CD14-positive monocyte (primary cell): ENCODE measurements at regions of chr2 and their contacts with region 1.

Region 1: GRCh38 chr2:45778720-45779171 is 127.3 kb downstream of the PRKCE start:
- DNase-seq: peak; percentile 70 to 78 (median 77)
- H3K4me3 ChIP-seq: peak overlapping the region in 1 of 3 experiments; percentile 50
- H3K4me3 Mint-ChIP-seq: peak overlapping the region; percentile 50 to 57
- H3K27ac ChIP-seq: no peak overlapping the region
- H3K27ac Mint-ChIP-seq: no peak overlapping the region
- H3K4me1 ChIP-seq: peaks cover 25 to 27% of the 10 kb centered on the region in 2 donors
- H3K4me1 Mint-ChIP-seq: peaks cover 50% of the 10 kb centered on the region
- H3K27me3 ChIP-seq: no peaks in the 10 kb centered on the region
- H3K27me3 Mint-ChIP-seq: peaks cover 0 to 1% (median 0%) of the 10 kb centered on the region in 3 donors
- CTCF ChIP-seq: peak; percentile 89

Region 2: DNA sequence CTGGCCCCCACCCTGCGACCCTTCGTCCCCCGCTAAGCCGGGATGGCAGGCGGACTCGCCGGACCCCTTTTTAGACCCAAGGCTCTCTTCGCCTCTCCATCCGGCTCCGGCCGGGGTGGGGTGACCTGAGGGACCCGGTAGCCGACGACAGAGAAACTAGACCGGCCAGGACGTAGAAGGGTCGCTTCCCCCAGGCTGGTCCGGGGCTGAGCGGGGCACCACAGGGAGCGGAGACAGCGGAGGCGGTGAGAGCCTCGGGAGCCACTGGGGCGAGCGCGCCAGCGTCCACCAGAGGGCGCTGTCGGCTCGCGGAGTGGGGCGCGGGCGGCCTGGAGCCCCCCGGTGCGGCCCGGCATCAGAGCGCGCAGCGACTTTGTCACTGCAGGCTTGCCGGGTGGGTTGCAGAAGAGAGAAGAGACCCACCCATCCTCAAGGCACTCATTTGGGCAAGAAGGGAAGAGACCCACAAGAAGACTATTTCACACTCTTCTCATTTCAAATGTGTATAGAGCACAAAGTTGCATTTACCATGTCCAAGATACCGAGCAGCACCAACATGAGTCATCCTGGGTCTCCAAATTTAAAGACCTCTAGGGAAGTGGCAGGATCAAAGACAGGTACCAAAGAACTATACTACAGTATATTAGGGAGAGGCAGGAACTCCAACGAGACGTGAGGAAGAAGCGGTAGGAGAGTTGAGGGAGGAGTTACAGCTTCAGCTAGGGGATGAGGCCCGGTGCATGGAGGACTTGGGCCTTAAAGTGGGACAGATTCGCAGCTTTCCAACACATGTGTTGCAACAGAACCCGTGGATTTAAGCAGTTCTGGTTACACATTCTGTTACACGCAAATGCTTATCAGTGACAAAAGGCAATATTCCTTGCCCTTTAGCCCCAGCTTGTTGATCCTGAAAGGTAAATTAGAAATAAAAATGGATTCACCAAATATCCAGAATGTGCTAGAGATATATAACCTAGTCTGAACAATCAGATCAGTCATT is 134.9 kb before region 1 on chr2:
- intact Hi-C with region 1: loop called (anchors 2 to 5 kb)
- DNase-seq: peak; percentile 64 to 72 (median 71)
- H3K4me3 ChIP-seq: peak overlapping the region; percentile 27 to 73 (median 40)
- H3K4me3 Mint-ChIP-seq: peak overlapping the region; percentile 79 to 86
- H3K27ac ChIP-seq: no peak overlapping the region
- H3K27ac Mint-ChIP-seq: peak overlapping the region in 3 of 7 donors; percentile 54 to 89 (median 56)
- H3K4me1 ChIP-seq: peaks cover 10 to 12% of the 10 kb centered on the region in 2 donors
- H3K4me1 Mint-ChIP-seq: peaks cover 16% of the 10 kb centered on the region
- H3K27me3 ChIP-seq: peaks cover 0 to 16% of the 10 kb centered on the region in 2 donors
- H3K27me3 Mint-ChIP-seq: peaks cover 18 to 27% (median 18%) of the 10 kb centered on the region in 3 donors
- CTCF ChIP-seq: peak; percentile 93

Region 3: GRCh38 chr2:45729753-45730512 is 48.8 kb before region 1 on chr2:
- intact Hi-C with region 1: loop called in 1 of 2 experiments (anchors 5 kb)
- DNase-seq: peak; percentile 68 to 80 (median 70)
- H3K4me3 ChIP-seq: peak overlapping the region in 1 of 3 experiments; percentile 35
- H3K4me3 Mint-ChIP-seq: peak overlapping the region; percentile 34 to 40
- H3K27ac ChIP-seq: peak overlapping the region; percentile 57 to 69
- H3K27ac Mint-ChIP-seq: peak overlapping the region; percentile 8 to 90 (median 76)
- H3K4me1 ChIP-seq: peaks cover 52 to 54% of the 10 kb centered on the region in 2 donors
- H3K4me1 Mint-ChIP-seq: peaks cover 58% of the 10 kb centered on the region
- H3K27me3 ChIP-seq: no peaks in the 10 kb centered on the region
- H3K27me3 Mint-ChIP-seq: peaks cover 0 to 4% (median 0%) of the 10 kb centered on the region in 3 donors
- CTCF ChIP-seq: peak; percentile 59

Region 4: DNA sequence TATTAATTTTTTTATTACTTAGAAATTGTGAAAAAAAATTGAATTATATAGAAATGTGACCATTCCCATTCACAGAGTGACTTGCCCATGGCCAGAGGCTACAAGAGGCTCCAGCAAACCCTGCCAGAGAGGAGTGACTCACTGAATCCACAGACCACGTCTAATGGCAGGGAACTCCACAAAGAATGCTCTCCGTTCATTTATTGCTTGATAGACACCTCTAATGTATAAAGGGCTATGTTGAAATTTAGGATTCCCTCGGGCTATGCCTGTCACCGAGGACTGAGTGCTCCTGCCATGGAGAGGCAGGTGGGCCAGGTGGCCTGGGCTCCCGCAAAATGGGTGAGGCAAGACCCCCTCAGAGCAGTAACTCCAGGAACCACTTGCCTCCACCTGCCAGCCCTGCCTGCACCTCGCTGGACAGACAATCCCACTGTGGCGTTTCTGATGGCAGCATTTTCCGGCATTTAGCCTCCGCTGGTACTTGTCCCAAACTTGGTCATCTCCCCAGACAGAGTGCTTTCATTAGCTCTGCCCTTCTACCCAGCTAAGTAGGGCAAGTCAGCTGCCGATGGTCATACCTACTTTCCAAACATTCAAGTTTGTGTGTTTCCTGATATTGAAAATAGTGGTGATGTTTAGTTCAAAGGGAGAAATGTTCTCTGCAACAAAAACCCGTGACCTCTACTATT is 73.0 kb after region 1 on chr2:
- intact Hi-C with region 1: no loop called
- DNase-seq: no peak
- H3K4me3 ChIP-seq: no peak overlapping the region
- H3K4me3 Mint-ChIP-seq: no peak overlapping the region
- H3K27ac ChIP-seq: no peak overlapping the region
- H3K27ac Mint-ChIP-seq: no peak overlapping the region
- H3K4me1 ChIP-seq: peaks cover 4 to 5% of the 10 kb centered on the region in 2 donors
- H3K4me1 Mint-ChIP-seq: peaks cover 22% of the 10 kb centered on the region
- H3K27me3 ChIP-seq: no peaks in the 10 kb centered on the region
- H3K27me3 Mint-ChIP-seq: peaks cover 0 to 2% (median 0%) of the 10 kb centered on the region in 3 donors
- CTCF ChIP-seq: no peak

Region 5: GRCh38 chr2:45889053-45889452 is 110.3 kb after region 1 on chr2:
- intact Hi-C with region 1: loop called in 1 of 2 experiments (anchors 10 kb)
- DNase-seq: peak in 2 of 3 donors; percentile 38 to 40
- H3K4me3 ChIP-seq: peak overlapping the region in 1 of 3 experiments; percentile 67
- H3K4me3 Mint-ChIP-seq: peak overlapping the region; percentile 55 to 59
- H3K27ac ChIP-seq: peak overlapping the region; percentile 81 to 96
- H3K27ac Mint-ChIP-seq: peak overlapping the region; percentile 90 to 99 (median 94)
- H3K4me1 ChIP-seq: peaks cover 99 to 100% of the 10 kb centered on the region in 2 donors
- H3K4me1 Mint-ChIP-seq: peaks cover 94% of the 10 kb centered on the region
- H3K27me3 ChIP-seq: no peaks in the 10 kb centered on the region
- H3K27me3 Mint-ChIP-seq: no peaks in the 10 kb centered on the region
- CTCF ChIP-seq: no peak

Region 6: DNA sequence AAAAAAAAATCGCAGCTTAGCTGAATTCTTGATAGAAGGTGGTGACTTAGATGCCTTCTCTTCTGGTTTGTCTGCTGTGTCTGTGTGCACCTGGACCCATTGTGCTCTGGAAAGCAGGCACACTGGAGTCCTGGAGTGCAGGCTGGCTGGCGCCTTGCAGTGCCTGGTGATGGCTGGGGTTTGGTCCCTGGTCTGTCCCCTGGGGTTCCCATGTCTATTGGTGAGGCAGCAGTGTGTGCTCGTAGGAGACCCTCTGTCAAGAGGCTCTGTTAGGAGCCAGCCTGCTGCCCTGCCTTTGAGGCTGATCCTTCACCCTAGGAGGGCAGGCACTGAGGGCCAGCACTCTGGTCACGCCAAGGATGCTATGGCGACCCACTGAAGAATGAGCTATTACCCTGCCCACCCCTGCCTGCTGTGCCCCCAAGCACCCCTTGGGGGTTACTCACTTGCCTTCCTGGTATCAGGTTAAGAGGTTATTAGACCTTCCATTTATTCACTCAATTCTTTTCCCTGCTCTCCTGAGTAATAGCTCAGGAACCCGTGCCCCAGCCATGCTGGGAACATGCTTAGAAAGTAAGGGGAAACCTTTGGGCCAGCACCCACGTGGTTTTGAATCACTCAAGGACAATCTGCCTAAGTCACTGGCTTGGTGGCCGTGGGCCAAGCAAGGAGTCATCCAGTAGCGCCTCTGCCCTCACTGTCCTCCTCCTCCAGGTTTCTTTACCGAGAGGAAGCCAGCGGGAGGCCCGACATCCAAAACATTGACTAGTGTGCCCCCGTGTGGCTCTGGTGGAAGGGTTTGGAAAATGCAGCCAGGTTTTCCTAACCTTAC is 157.3 kb after region 1 on chr2:
- intact Hi-C with region 1: loop called in 1 of 2 experiments (anchors 5 kb)
- DNase-seq: peak; percentile 90 to 97 (median 96)
- H3K4me3 ChIP-seq: no peak overlapping the region
- H3K4me3 Mint-ChIP-seq: peak overlapping the region in 1 of 2 donors; percentile 48
- H3K27ac ChIP-seq: no peak overlapping the region
- H3K27ac Mint-ChIP-seq: peak overlapping the region in 6 of 7 donors; percentile 30 to 84 (median 70)
- H3K4me1 ChIP-seq: peaks cover 6% of the 10 kb centered on the region in 2 donors
- H3K4me1 Mint-ChIP-seq: peaks cover 10% of the 10 kb centered on the region
- H3K27me3 ChIP-seq: no peaks in the 10 kb centered on the region
- H3K27me3 Mint-ChIP-seq: no peaks in the 10 kb centered on the region
- CTCF ChIP-seq: peak; percentile 79